ENCODE measurements at regions of chr1 and their contacts with region 1.

Region 1: DNA sequence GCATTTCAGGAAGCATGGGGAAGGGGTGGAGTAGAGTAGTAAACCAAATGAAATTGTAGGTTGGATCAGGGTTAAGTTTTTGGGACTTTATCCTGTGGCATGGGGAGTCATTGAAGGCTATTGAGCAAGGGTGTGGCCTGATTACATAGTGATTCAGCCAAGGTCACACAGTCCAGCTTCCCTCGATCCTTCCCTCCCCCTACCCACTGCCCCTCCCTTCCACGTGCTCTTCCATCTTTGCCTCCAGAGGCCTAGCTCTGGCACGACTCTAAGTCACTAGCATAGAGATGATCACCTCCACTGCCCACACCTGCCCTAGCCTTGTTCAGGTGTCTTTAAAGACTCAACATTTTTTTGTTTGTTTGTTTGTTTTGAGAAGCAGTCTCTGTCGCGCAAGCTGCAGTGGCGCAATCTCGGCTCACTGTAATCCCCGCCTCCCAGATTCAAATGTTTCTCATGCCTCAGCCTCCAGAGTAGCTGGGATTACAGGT is 37.2 kb upstream of the SLC9A1 start:
- DNase-seq: peak; percentile 78
- ATAC-seq: peak; percentile 88
- H3K4me3 ChIP-seq: peak overlapping the region in 1 of 3 experiments; percentile 17; a peak in 1 of 6 replicates
- H3K27ac ChIP-seq: no peak overlapping the region
- H3K4me1 ChIP-seq: peaks cover 17% of the 10 kb centered on the region
- H3K27me3 ChIP-seq: peaks cover 0 to 7% of the 10 kb centered on the region in 2 experiments; a peak in 1 of 5 replicates
- CTCF ChIP-seq: no peak
- EP300 ChIP-seq: peak in 1 of 2 experiments; percentile 59; a peak in 2 of 4 replicates
- POLR2A ChIP-seq: no peak
- RAD21 ChIP-seq: no peak

Region 2: GRCh38 chr1:27102707-27103491 is 89.2 kb before region 1 on chr1:
- CTCF ChIA-PET with region 1: no interaction called
- POLR2A ChIA-PET with region 1: no interaction called
- in situ Hi-C with region 1: no loop called
- intact Hi-C with region 1: loop called (anchors 5 kb)
- DNase-seq: peak; percentile 39
- ATAC-seq: peak; percentile 76
- H3K4me3 ChIP-seq: no peak overlapping the region
- H3K27ac ChIP-seq: no peak overlapping the region
- H3K4me1 ChIP-seq: peaks cover 25% of the 10 kb centered on the region
- H3K27me3 ChIP-seq: no peaks in the 10 kb centered on the region; a peak in 1 of 5 replicates
- CTCF ChIP-seq: peak; percentile 98
- EP300 ChIP-seq: no peak
- POLR2A ChIP-seq: no peak
- RAD21 ChIP-seq: peak; percentile 95

Region 3: DNA sequence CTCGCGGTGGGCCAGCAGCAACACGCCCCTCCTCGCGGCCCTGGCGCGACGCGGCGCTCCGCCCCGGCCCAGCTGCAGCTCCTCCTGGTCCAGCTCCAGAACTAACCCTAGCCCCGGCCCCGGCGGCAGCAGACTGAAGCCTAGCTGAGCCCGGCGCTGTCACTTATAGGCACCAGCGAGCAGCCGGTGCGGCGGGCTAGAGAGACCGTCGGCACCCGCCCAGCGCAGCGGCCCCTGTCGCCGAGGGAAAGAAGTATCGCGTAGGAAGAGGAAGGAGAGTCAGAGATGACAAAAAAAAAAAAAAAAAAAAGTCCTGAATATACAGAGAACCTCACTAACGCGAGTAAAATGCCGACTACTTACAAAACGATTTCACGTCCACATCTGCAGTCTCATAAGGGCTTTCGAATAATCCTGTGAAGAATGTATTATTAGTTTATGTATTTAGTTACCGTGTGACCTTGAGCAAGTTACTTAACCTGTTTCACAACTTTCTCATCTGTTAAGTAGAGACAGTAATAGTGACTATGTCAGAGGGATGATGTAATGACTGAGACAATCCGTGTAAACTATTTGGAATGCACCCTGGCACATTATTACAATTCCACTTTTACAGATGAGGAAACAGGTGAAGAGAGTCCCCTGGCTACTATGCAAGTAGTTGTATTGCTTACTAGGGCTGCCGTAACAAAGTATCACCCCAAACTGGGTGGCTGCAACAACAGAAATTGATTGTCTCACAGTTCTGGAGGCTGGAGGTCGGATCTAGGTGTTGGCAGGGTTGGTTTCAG is 36.9 kb before region 1 on chr1 and contains the start of gene SLC9A1:
- CTCF ChIA-PET with region 1: no interaction called
- POLR2A ChIA-PET with region 1: interaction called, 10 read pairs
- in situ Hi-C with region 1: no loop called
- intact Hi-C with region 1: loop called (anchors 1 kb)
- DNase-seq: peak; percentile 85
- ATAC-seq: peak; percentile 94
- H3K4me3 ChIP-seq: peak within 1 kb of the TSS; percentile 72 to 81 (median 79)
- H3K27ac ChIP-seq: peak within 1 kb of the TSS; percentile 41
- H3K4me1 ChIP-seq: peaks cover 47% of the 10 kb centered on the region
- H3K27me3 ChIP-seq: no peaks in the 10 kb centered on the region
- CTCF ChIP-seq: peak; percentile 90
- EP300 ChIP-seq: peak; percentile 36 to 62; a peak in 3 of 4 replicates
- POLR2A ChIP-seq: peak; percentile 99
- RAD21 ChIP-seq: peak; percentile 65
- total RNA-seq, gene SLC9A1: 2.7 and 2.9 TPM in 2 replicates

Region 4: GRCh38 chr1:27203946-27204345 is 11.9 kb after region 1 on chr1:
- CTCF ChIA-PET with region 1: no interaction called
- POLR2A ChIA-PET with region 1: no interaction called
- in situ Hi-C with region 1: no loop called
- intact Hi-C with region 1: no loop called
- DNase-seq: no peak
- ATAC-seq: no peak
- H3K4me3 ChIP-seq: no peak overlapping the region
- H3K27ac ChIP-seq: no peak overlapping the region
- H3K4me1 ChIP-seq: no peaks in the 10 kb centered on the region
- H3K27me3 ChIP-seq: peaks cover 1 to 13% of the 10 kb centered on the region in 2 experiments; a peak in 2 of 5 replicates
- CTCF ChIP-seq: no peak
- EP300 ChIP-seq: no peak
- POLR2A ChIP-seq: no peak
- RAD21 ChIP-seq: no peak

Region 5: DNA sequence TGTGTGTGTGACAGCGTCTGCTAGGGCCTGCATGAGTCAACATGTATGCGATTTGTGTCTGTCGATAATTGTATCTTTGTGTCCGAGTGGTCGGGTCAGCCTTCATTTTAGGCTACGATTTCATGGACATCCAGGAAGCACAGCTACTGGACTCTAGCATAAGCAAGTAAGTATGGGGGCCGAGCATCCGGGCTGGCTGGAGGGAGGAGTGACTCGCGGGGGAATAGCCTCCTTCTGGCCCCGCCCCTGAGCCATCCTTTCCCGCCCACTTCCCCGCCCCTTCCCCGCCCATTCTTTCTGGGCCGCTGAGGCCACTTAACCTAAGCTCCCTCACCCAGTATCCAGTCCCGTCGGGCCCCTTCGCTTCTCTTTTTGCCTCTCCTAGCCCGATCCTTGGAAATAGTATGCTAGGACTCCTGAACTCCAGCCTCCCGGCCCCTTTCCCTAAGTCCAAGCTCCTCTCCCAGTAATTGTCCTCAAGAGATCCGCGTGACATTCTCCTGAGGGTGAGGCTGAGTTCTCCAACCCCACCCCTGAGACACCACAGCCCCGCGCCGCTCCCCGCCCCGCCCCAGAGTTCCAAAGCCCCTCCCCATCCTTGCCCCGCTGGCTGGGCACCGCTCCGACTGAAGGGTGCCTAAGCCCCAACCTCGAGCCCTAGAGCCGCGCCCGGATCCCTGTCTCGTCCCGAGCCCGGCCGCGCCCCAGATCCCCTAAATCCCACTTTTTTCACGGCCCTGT is 173.5 kb after region 1 on chr1:
- CTCF ChIA-PET with region 1: no interaction called
- POLR2A ChIA-PET with region 1: no interaction called
- in situ Hi-C with region 1: no loop called
- intact Hi-C with region 1: no loop called
- DNase-seq: peak; percentile 68
- ATAC-seq: peak; percentile 60
- H3K4me3 ChIP-seq: peak overlapping the region; percentile 64 to 84 (median 84)
- H3K27ac ChIP-seq: peak overlapping the region; percentile 33
- H3K4me1 ChIP-seq: peaks cover 27% of the 10 kb centered on the region
- H3K27me3 ChIP-seq: peaks cover 2 to 10% of the 10 kb centered on the region in 2 experiments; a peak in 3 of 5 replicates
- CTCF ChIP-seq: no peak
- EP300 ChIP-seq: peak in 1 of 2 experiments; percentile 82; a peak in 1 of 4 replicates
- POLR2A ChIP-seq: peak; percentile 35 to 47; a peak in 2 of 4 replicates
- RAD21 ChIP-seq: no peak

Measured in HepG2 (cell line).